Head of caudate nucleus (tissue), 42 donors: ENCODE measurements at regions of chrX and their contacts with region 1.

Region 1: DNA sequence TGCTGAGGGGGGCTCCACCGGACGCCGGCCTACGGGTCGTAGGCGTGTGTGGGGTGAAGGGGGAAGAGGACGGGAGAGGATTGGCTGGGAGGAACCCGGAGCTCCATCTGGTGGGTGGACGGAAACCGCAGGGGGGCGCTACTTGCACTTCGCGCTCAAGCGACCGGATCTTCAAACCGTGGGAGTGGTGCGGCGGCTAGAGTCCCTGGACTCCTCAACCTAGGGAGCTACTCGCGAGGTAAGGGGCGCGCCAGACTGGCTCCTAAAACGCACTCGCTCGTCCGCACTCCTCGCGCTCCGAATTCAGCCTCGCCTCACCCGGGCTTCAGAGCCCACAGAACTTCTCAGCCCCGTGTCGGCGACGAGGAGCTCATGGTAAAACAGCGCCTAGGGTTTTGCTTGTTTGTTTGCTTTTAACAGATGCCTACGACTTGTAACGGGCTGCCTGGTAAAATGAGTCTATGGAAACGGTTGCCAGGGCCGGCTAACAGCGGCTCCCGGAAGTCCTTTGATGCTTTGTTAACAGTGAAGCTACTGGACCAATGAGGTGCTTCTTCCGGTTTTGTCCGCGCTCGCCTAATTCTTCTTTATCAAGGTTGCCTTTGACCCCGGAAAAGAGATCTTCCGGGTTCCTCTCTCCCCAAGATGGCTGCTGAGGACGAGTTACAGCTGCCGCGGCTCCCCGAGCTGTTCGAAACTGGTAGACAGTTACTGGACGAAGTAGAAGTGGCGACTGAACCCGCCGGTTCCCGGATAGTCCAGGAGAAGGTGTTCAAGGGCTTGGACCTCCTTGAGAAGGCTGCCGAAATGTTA is at the start of gene IGBP1:
- DNase-seq: peak; percentile 69 to 94 (median 84)

Region 2: GRCh38 chrX:70444326-70444945 is 310.9 kb after region 1 on chrX and contains the start of gene DLG3:
- intact Hi-C with region 1: loop called (anchors 10 kb)
- DNase-seq: peak; percentile 58 to 89 (median 79)